Panc1 (cell line): ENCODE measurements at regions of chr22 and their contacts with region 1.

Region 1: GRCh38 chr22:36028646-36029405 is at the start of gene RBFOX2:
- DNase-seq: peak; percentile 67
- ATAC-seq: peak; percentile 95
- H3K4me3 ChIP-seq: peak within 1 kb of the TSS; percentile 80 to 86
- H3K27ac ChIP-seq: peak within 1 kb of the TSS; percentile 84
- H3K4me1 ChIP-seq: peaks cover 10% of the 10 kb centered on the region
- H3K27me3 ChIP-seq: no peaks in the 10 kb centered on the region
- CTCF ChIP-seq: no peak
- total RNA-seq, gene RBFOX2: 81.1 TPM

Region 2: GRCh38 chr22:35611891-35612576 is 416.8 kb before region 1 on chr22:
- CTCF ChIA-PET with region 1: no interaction called
- POLR2A ChIA-PET with region 1: interaction called, 11 read pairs
- in situ Hi-C with region 1: no loop called
- intact Hi-C with region 1: no loop called
- DNase-seq: no peak
- ATAC-seq: 0 out of 2 replicates have a peak, but pooled peaks have one; percentile 15
- H3K4me3 ChIP-seq: no peak overlapping the region
- H3K27ac ChIP-seq: peak overlapping the region; percentile 96
- H3K4me1 ChIP-seq: peaks cover 25% of the 10 kb centered on the region
- H3K27me3 ChIP-seq: no peaks in the 10 kb centered on the region
- CTCF ChIP-seq: no peak

Region 3: GRCh38 chr22:36052505-36053270 is 23.9 kb after region 1 on chr22:
- CTCF ChIA-PET with region 1: no interaction called
- POLR2A ChIA-PET with region 1: interaction called, 16 read pairs
- in situ Hi-C with region 1: no loop called
- intact Hi-C with region 1: no loop called
- DNase-seq: no peak
- ATAC-seq: peak; percentile 70; the same call in 1 of the 2 replicates
- H3K4me3 ChIP-seq: no peak overlapping the region
- H3K27ac ChIP-seq: no peak overlapping the region
- H3K4me1 ChIP-seq: no peaks in the 10 kb centered on the region; the same call in 1 of the 2 replicates
- H3K27me3 ChIP-seq: no peaks in the 10 kb centered on the region
- CTCF ChIP-seq: no peak

Region 4: DNA sequence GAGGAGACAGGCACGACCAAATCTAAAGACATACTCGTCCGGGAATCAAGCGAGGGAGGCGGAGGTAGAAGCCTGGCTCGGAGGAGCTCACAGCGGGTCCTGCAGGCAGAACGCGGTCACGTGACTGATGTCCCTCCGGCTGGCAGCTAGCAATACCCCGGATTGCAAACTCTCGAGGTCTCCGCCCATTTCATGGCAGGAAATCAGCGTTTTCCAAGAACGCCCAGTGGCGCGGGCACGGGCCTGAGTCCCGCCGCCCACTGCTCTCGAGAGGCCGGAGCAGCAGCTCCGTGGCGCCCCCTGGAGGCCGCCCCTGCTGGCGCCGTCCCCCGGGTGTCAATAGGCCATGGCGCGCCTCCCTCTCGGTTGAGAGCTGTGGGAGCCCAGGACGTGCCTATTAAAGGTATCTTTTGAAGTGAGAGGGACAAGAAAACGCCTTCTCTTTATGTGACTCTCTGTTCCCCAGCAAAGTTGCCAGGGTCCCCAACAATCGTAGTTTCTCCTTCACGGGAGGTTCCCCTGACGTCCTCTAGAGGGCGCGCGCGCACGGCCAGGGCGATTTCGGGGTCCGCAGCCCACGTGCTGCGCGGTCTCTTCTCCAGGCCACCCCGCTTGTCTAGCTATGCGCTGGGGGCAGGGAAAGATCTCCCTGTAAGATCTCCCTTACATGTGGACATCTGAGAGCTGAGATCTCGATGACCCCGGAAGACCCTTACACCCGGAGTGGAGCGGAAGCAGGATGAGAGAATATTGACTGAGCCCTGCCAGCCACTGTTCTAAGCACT is 37.1 kb after region 1 on chr22:
- CTCF ChIA-PET with region 1: interaction called, 21 read pairs
- POLR2A ChIA-PET with region 1: interaction called, 9 read pairs
- in situ Hi-C with region 1: no loop called
- intact Hi-C with region 1: no loop called
- DNase-seq: peak; percentile 48
- ATAC-seq: peak; percentile 94
- H3K4me3 ChIP-seq: peak overlapping the region; percentile 52 to 77
- H3K27ac ChIP-seq: peak overlapping the region; percentile 84
- H3K4me1 ChIP-seq: no peaks in the 10 kb centered on the region
- H3K27me3 ChIP-seq: no peaks in the 10 kb centered on the region
- CTCF ChIP-seq: peak; percentile 99

Region 5: GRCh38 chr22:36765943-36766450 is 737.2 kb after region 1 on chr22:
- CTCF ChIA-PET with region 1: no interaction called
- POLR2A ChIA-PET with region 1: interaction called, 17 read pairs
- in situ Hi-C with region 1: no loop called
- intact Hi-C with region 1: no loop called
- DNase-seq: no peak
- ATAC-seq: no peak
- H3K4me3 ChIP-seq: no peak overlapping the region
- H3K27ac ChIP-seq: no peak overlapping the region
- H3K4me1 ChIP-seq: no peaks in the 10 kb centered on the region
- H3K27me3 ChIP-seq: no peaks in the 10 kb centered on the region
- CTCF ChIP-seq: no peak